ENCODE measurements at regions of chr13 and their contacts with region 1.

Region 1: GRCh38 chr13:31638577-31638976 is 100.7 kb upstream of the RXFP2 start:
- DNase-seq: peak; percentile 93
- H3K4me3 ChIP-seq: no peak overlapping the region
- H3K27ac ChIP-seq: peak overlapping the region; percentile 94
- H3K4me1 ChIP-seq: peaks cover 26% of the 10 kb centered on the region
- H3K27me3 ChIP-seq: no peaks in the 10 kb centered on the region
- CTCF ChIP-seq: no peak
- POLR2A ChIP-seq: no peak

Region 2: GRCh38 chr13:31605076-31605858 is 33.3 kb before region 1 on chr13:
- CTCF ChIA-PET with region 1: no interaction called
- POLR2A ChIA-PET with region 1: no interaction called
- dilution Hi-C with region 1: no loop called
- intact Hi-C with region 1: no loop called
- DNase-seq: no peak
- H3K4me3 ChIP-seq: no peak overlapping the region
- H3K27ac ChIP-seq: no peak overlapping the region
- H3K4me1 ChIP-seq: no peaks in the 10 kb centered on the region
- H3K27me3 ChIP-seq: no peaks in the 10 kb centered on the region
- CTCF ChIP-seq: no peak
- POLR2A ChIP-seq: no peak

Region 3: DNA sequence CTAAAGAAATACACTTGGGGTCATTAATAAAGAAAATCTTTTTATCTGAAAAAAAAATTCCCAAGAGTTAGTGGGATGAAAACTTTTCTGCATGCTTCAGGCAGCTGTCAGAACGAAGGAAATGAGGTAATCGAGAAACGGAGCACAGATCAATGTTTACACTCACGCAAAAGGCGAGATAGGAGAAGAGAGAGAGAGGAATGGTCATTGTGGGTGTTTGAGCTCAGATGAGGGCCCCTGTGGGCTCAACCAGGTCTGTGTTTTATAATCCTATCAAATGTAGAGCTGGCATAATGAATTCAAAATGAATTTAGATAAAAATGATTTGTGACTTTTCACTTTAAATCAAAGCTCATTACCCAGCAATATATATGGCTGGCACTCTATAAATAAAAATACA is 94.5 kb after region 1 on chr13:
- CTCF ChIA-PET with region 1: no interaction called
- POLR2A ChIA-PET with region 1: no interaction called
- dilution Hi-C with region 1: no loop called
- intact Hi-C with region 1: loop called (anchors 2 kb)
- DNase-seq: peak; percentile 47
- H3K4me3 ChIP-seq: peak overlapping the region in 1 of 3 experiments; percentile 15
- H3K27ac ChIP-seq: no peak overlapping the region
- H3K4me1 ChIP-seq: peaks cover 18% of the 10 kb centered on the region
- H3K27me3 ChIP-seq: peaks cover 0 to 8% of the 10 kb centered on the region in 2 experiments
- CTCF ChIP-seq: no peak
- POLR2A ChIP-seq: no peak

Measured in endothelial cell of umbilical vein (primary cell).